ENCODE measurements at regions of chr4 and their contacts with region 1.

Region 1: GRCh38 chr4:26719954-26720552 is 136.2 kb downstream of the TBC1D19 start:
- DNase-seq: no peak
- ATAC-seq: no peak
- H3K4me3 ChIP-seq: no peak overlapping the region
- H3K27ac ChIP-seq: no peak overlapping the region
- H3K4me1 ChIP-seq: peaks cover 0 to under 1% (median 0%) of the 10 kb centered on the region in 9 donors
- H3K27me3 ChIP-seq: no peaks in the 10 kb centered on the region
- CTCF ChIP-seq: peak; percentile 34 to 71 (median 66)

Region 2: GRCh38 chr4:26466578-26467270 is 253.3 kb before region 1 on chr4:
- intact Hi-C with region 1: loop called in 5 of 10 experiments (anchors 2 to 10 kb)
- DNase-seq: no peak
- ATAC-seq: no peak
- H3K4me3 ChIP-seq: no peak overlapping the region
- H3K27ac ChIP-seq: no peak overlapping the region
- H3K4me1 ChIP-seq: no peaks in the 10 kb centered on the region
- H3K27me3 ChIP-seq: peaks cover 0 to 4% (median 0%) of the 10 kb centered on the region in 7 donors
- CTCF ChIP-seq: no peak